Natural killer cell (primary cell): ENCODE measurements at regions of chr2 and their contacts with region 1.

Region 1: GRCh38 chr2:19955544-19956422 is 34.1 kb downstream of the WDR35 start:
- DNase-seq: peak; percentile 17 to 74
- ATAC-seq: peak; percentile 82 to 96 (median 89)
- H3K4me3 ChIP-seq: no peak overlapping the region
- H3K4me3 Mint-ChIP-seq: no peak overlapping the region
- H3K27ac ChIP-seq: no peak overlapping the region
- H3K27ac Mint-ChIP-seq: no peak overlapping the region
- H3K4me1 ChIP-seq: no peaks in the 10 kb centered on the region
- H3K4me1 Mint-ChIP-seq: no peaks in the 10 kb centered on the region
- H3K27me3 ChIP-seq: no peaks in the 10 kb centered on the region
- H3K27me3 Mint-ChIP-seq: no peaks in the 10 kb centered on the region
- CTCF ChIP-seq: peak; percentile 69

Region 2: GRCh38 chr2:20015472-20016083 is 59.8 kb after region 1 on chr2:
- intact Hi-C with region 1: loop called (anchors 5 kb)
- DNase-seq: peak in 1 of 2 donors; percentile 69
- ATAC-seq: peak; percentile 54 to 62 (median 54)
- H3K4me3 ChIP-seq: no peak overlapping the region
- H3K4me3 Mint-ChIP-seq: no peak overlapping the region
- H3K27ac ChIP-seq: no peak overlapping the region
- H3K27ac Mint-ChIP-seq: no peak overlapping the region
- H3K4me1 ChIP-seq: peaks cover 10% of the 10 kb centered on the region
- H3K4me1 Mint-ChIP-seq: peaks cover 7 to 10% of the 10 kb centered on the region in 2 donors
- H3K27me3 ChIP-seq: peaks cover 20% of the 10 kb centered on the region
- H3K27me3 Mint-ChIP-seq: peaks cover 28 to 36% of the 10 kb centered on the region in 2 donors
- CTCF ChIP-seq: peak; percentile 66